ENCODE measurements at regions of chr4 and their contacts with region 1.

Region 1: DNA sequence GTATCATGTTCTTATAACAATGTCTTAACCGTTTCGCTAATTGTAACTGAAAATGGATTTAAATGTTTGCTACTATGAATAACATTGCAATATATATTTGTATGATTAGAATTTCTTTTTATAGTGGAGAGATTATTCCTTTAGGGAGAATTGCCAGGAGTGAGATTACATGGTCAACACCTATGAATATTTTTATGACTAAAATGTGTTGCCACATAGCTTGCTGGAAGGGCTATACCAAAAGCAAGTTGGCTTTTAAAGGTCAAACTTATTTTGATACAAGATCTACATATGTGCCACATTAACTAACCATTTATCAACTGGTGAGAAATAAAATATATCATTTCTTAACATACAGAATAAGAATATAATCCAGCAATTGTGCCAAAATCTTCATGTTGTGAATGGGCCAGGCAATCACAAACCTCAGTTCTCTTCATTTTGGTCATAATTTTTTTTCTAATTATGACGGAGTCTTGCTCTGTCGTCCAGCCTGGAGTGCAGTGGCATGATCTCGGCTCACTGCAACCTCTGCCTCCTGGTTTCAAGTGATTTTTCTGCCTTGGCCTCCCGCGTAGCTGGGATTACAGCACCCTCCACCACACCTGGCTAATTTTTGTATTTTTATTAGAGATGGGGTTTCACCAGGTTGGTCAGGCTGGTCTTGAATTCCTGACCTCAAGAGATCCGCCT is 10.0 kb upstream of the EGF start:
- DNase-seq: no peak
- ATAC-seq: no peak
- H3K4me3 ChIP-seq: no peak overlapping the region
- H3K4me3 Mint-ChIP-seq: no peak overlapping the region
- H3K27ac ChIP-seq: no peak overlapping the region
- H3K27ac Mint-ChIP-seq: no peak overlapping the region
- H3K4me1 ChIP-seq: no peaks in the 10 kb centered on the region
- H3K4me1 Mint-ChIP-seq: no peaks in the 10 kb centered on the region
- H3K27me3 ChIP-seq: peaks cover 0 to 10% of the 10 kb centered on the region in 2 experiments
- H3K27me3 Mint-ChIP-seq: peaks cover 25 to 30% of the 10 kb centered on the region in 2 donors

Region 2: DNA sequence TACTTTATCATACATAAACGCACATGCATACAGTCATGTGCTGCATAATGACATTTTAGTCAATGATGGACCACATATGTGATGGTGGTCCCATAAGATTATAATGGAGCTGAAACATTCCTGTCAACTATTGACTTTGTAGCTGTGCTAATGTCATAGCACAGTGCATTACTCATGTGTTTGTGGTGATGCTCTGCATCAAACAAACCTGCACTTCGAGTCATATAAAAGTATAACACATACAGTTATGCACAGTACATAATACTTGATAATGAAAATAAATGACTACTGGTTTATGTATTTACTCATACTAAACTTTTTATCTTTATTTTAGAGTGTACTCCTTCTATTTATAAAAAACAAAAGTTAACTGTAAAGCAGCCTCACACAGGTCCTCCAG is 403.2 kb before region 1 on chr4:
- CTCF ChIA-PET with region 1: interaction called in 1 of 2 experiments, 15 read pairs
- POLR2A ChIA-PET with region 1: no interaction called
- DNase-seq: no peak
- ATAC-seq: no peak
- H3K4me3 ChIP-seq: no peak overlapping the region
- H3K4me3 Mint-ChIP-seq: no peak overlapping the region
- H3K27ac ChIP-seq: no peak overlapping the region
- H3K27ac Mint-ChIP-seq: no peak overlapping the region
- H3K4me1 ChIP-seq: no peaks in the 10 kb centered on the region
- H3K4me1 Mint-ChIP-seq: no peaks in the 10 kb centered on the region
- H3K27me3 ChIP-seq: no peaks in the 10 kb centered on the region
- H3K27me3 Mint-ChIP-seq: no peaks in the 10 kb centered on the region

Region 3: GRCh38 chr4:109990261-109991257 is 87.9 kb after region 1 on chr4:
- CTCF ChIA-PET with region 1: no interaction called
- POLR2A ChIA-PET with region 1: no interaction called
- DNase-seq: no peak
- ATAC-seq: no peak
- H3K4me3 ChIP-seq: no peak overlapping the region
- H3K4me3 Mint-ChIP-seq: no peak overlapping the region
- H3K27ac ChIP-seq: no peak overlapping the region
- H3K27ac Mint-ChIP-seq: no peak overlapping the region
- H3K4me1 ChIP-seq: no peaks in the 10 kb centered on the region
- H3K4me1 Mint-ChIP-seq: peaks cover 0 to 6% (median 0%) of the 10 kb centered on the region in 3 donors
- H3K27me3 ChIP-seq: peaks cover 0 to 3% of the 10 kb centered on the region in 2 experiments
- H3K27me3 Mint-ChIP-seq: peaks cover 4 to 7% of the 10 kb centered on the region in 2 donors